PC-9 (cell line): ENCODE measurements at regions of chr17 and their contacts with region 1.

Region 1: DNA sequence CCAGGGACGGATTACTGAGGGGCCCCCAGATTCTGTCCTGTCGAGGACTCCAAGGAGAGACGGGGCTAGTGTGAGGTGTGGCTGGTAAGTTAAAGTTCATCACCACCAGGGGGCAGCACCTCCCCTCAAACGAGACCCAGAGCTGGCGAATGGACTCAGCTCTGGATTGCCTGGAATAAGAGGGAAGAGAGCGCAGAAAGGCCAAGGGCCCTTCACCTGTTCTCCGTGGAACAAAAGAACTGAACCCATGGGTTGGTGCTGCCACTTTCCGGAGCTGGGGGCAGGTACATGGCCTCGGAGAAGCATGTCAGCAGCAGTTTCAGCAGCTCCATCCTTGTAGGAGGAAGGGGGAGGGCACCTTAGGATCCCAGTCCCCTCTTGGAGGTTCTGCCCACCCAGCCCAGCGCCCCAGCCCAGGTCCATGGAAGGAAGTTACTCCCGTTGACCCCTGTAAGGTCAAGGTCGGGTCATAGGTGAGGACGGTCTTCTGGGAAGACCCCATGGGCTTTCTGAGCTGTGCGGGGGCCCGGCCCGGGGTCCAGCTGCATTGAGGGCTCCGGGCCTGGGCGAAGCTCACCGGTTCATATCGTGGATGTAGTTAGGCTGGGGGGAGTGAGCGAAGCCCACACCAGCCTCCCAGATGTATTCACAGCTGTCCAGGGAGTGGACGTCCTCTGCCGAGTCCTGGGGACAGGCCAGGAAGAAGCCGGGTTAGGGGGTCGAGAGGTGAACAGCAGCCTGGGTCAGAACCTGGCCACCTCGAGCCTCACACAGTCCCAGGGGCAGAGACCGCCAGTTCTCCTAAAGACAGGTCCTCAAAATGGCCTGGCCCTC is 10.7 kb downstream of the HID1 start:
- DNase-seq: peak; percentile 63 to 85
- H3K4me3 ChIP-seq: no peak overlapping the region
- H3K27ac ChIP-seq: no peak overlapping the region
- H3K4me1 ChIP-seq: no peaks in the 10 kb centered on the region
- H3K27me3 ChIP-seq: no peaks in the 10 kb centered on the region
- CTCF ChIP-seq: peak; percentile 91

Region 2: GRCh38 chr17:74730491-74731346 is 231.2 kb before region 1 on chr17:
- CTCF ChIA-PET with region 1: no interaction called
- POLR2A ChIA-PET with region 1: no interaction called
- intact Hi-C with region 1: no loop called
- DNase-seq: no peak
- H3K4me3 ChIP-seq: no peak overlapping the region
- H3K27ac ChIP-seq: no peak overlapping the region
- H3K4me1 ChIP-seq: no peaks in the 10 kb centered on the region
- H3K27me3 ChIP-seq: peaks cover 46% of the 10 kb centered on the region; the same call in 1 of the 2 replicates
- CTCF ChIP-seq: no peak

Region 3: GRCh38 chr17:74748529-74749365 is 213.1 kb before region 1 on chr17 and contains the start of gene NHERF1:
- CTCF ChIA-PET with region 1: interaction called, 4 read pairs
- POLR2A ChIA-PET with region 1: no interaction called
- intact Hi-C with region 1: loop called (anchors 1 kb)
- DNase-seq: peak; percentile 30 to 78
- H3K4me3 ChIP-seq: peak within 1 kb of the TSS; percentile 99
- H3K27ac ChIP-seq: no peak within 1 kb of the TSS
- H3K4me1 ChIP-seq: peaks cover 39% of the 10 kb centered on the region
- H3K27me3 ChIP-seq: no peaks in the 10 kb centered on the region
- CTCF ChIP-seq: 0 out of 2 replicates have a peak, but pooled peaks have one; percentile 29
- total RNA-seq, gene NHERF1: 83.6 and 105 TPM in 2 replicates

Region 4: GRCh38 chr17:74923533-74924249 is 38.2 kb before region 1 on chr17:
- CTCF ChIA-PET with region 1: interaction called, 5 read pairs
- POLR2A ChIA-PET with region 1: no interaction called
- intact Hi-C with region 1: loop called (anchors 1 kb)
- DNase-seq: peak in 1 of 2 experiments; percentile 56
- H3K4me3 ChIP-seq: peak overlapping the region; percentile 55; the same call in 1 of the 2 replicates
- H3K27ac ChIP-seq: no peak overlapping the region
- H3K4me1 ChIP-seq: no peaks in the 10 kb centered on the region
- H3K27me3 ChIP-seq: peaks cover 34% of the 10 kb centered on the region
- CTCF ChIP-seq: peak; percentile 92

Region 5: DNA sequence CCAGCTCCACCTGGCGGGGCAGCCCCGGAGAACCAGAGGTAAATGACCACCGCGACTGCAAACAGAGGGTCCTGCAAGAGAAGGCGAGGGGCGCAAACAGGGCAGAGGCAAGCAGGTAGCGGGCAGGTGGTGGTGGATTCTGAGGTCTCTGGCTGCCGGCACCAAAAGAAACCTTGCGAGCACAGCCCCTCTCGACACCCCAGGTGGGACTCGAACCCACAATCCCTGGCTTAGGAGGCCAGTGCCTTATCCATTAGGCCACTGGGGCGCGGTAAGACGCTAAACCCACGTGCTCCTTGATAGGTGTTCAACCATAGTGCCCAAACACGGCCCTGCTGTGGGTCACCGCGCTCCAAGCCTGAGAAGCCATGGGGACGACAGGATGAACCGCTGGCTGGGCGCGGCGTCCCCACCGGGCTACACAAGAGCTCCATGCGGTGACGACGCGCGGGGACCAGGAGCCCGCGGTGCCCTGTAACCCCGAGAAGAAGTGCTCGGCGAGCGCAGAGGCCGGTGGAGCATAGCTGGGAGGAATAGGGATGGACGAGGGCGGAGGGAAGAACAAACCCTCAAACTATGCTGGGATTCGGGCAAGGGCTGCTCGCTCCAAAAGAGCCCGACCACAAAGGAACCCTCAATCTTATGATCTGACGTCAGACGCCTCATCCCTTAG is 72.5 kb after region 1 on chr17:
- CTCF ChIA-PET with region 1: interaction called, 4 read pairs
- POLR2A ChIA-PET with region 1: no interaction called
- intact Hi-C with region 1: loop called (anchors 2 kb)
- DNase-seq: peak; percentile 88
- H3K4me3 ChIP-seq: peak overlapping the region; percentile 98
- H3K27ac ChIP-seq: peak overlapping the region; percentile 90
- H3K4me1 ChIP-seq: peaks cover 30% of the 10 kb centered on the region
- H3K27me3 ChIP-seq: no peaks in the 10 kb centered on the region
- CTCF ChIP-seq: peak; percentile 45; the same call in 1 of the 2 replicates

Region 6: DNA sequence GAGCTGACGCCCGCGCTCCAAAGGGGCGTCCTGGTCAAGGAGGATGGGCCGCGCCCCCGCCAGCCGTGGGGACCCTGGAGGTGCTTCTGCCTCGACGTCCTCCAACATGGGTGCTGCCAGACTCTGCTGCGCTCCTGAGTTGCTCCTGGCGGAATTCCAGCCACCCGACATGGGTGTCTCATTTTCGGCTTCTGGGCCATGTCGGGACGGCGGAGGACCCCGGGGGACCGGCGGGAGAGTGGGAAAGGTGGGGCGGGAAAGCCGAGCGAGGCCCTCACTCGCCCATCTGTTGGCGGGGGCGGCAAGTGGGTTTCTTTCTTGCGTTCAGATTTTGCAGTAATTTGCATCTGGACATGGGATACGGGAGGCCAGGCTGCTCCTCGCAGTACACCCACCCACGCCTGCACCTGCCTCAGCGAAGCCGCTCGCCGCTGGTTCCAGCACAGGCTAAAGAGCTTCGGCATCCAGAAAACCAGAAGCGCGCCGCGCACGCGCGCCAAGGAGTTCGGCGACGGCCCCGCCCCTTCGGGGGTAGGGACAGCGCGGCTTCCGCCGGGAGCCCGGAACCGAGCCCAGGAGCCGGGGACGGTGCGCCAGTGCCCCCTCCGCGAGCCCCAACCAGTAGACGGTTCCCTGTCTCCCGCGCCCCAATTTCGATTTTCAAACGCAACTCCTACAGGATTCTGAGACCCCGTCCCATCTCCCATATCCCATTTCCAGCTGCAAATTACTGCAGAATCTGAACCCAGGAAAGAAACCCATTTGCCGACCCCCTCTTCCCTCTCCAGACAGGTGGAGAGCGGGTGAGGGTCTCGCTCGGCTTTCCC is 147.7 kb after region 1 on chr17 and contains the start of gene ARMC7:
- CTCF ChIA-PET with region 1: interaction called, 21 read pairs
- POLR2A ChIA-PET with region 1: no interaction called
- intact Hi-C with region 1: loop called (anchors 2 kb)
- DNase-seq: peak; percentile 69 to 92
- H3K4me3 ChIP-seq: peak within 1 kb of the TSS; percentile 59
- H3K27ac ChIP-seq: peak within 1 kb of the TSS; percentile 44; the same call in 1 of the 2 replicates
- H3K4me1 ChIP-seq: peaks cover 12% of the 10 kb centered on the region; the same call in 1 of the 2 replicates
- H3K27me3 ChIP-seq: no peaks in the 10 kb centered on the region
- CTCF ChIP-seq: no peak
- total RNA-seq, gene ARMC7: 19.2 and 20.5 TPM in 2 replicates

Region 7: GRCh38 chr17:75163074-75163473 is 201.2 kb after region 1 on chr17:
- CTCF ChIA-PET with region 1: no interaction called
- POLR2A ChIA-PET with region 1: no interaction called
- intact Hi-C with region 1: no loop called
- DNase-seq: no peak
- H3K4me3 ChIP-seq: no peak overlapping the region
- H3K27ac ChIP-seq: no peak overlapping the region
- H3K4me1 ChIP-seq: peaks cover 29% of the 10 kb centered on the region
- H3K27me3 ChIP-seq: no peaks in the 10 kb centered on the region
- CTCF ChIP-seq: no peak